ENCODE measurements at regions of chr2 and their contacts with region 1.

Region 1: DNA sequence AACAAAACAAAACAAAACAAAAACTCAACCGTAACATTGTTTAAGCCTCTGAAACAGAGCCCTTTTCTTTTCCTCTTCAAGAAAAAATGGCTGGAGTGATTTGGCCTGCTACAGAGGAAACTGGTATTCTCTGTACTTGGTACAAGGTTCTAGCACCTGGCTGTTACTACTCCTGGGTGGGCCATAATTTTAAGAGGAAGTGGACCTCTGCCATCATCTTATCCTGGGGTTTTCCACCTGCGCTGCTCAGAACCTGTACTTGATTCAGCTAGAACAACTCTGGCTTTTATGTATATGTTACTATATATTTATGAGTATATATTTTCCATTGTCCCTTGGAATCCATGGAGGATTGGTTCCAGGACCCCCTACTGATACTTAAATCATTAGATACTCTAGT is 22.5 kb downstream of the SRSF7 start:
- DNase-seq: no peak
- ATAC-seq: no peak
- H3K4me3 ChIP-seq: no peak overlapping the region
- H3K27ac ChIP-seq: no peak overlapping the region
- H3K4me1 ChIP-seq: no peaks in the 10 kb centered on the region
- H3K27me3 ChIP-seq: no peaks in the 10 kb centered on the region
- CTCF ChIP-seq: no peak

Region 2: GRCh38 chr2:38535744-38536506 is 192.8 kb before region 1 on chr2:
- intact Hi-C with region 1: loop called in 1 of 2 experiments (anchors 5 kb)
- DNase-seq: peak; percentile 87 to 91
- ATAC-seq: peak; percentile 95 to 98 (median 97)
- H3K4me3 ChIP-seq: peak overlapping the region; percentile 70
- H3K27ac ChIP-seq: peak overlapping the region; percentile 25
- H3K4me1 ChIP-seq: peaks cover 4% of the 10 kb centered on the region
- H3K27me3 ChIP-seq: no peaks in the 10 kb centered on the region
- CTCF ChIP-seq: peak; percentile 91

Region 3: DNA sequence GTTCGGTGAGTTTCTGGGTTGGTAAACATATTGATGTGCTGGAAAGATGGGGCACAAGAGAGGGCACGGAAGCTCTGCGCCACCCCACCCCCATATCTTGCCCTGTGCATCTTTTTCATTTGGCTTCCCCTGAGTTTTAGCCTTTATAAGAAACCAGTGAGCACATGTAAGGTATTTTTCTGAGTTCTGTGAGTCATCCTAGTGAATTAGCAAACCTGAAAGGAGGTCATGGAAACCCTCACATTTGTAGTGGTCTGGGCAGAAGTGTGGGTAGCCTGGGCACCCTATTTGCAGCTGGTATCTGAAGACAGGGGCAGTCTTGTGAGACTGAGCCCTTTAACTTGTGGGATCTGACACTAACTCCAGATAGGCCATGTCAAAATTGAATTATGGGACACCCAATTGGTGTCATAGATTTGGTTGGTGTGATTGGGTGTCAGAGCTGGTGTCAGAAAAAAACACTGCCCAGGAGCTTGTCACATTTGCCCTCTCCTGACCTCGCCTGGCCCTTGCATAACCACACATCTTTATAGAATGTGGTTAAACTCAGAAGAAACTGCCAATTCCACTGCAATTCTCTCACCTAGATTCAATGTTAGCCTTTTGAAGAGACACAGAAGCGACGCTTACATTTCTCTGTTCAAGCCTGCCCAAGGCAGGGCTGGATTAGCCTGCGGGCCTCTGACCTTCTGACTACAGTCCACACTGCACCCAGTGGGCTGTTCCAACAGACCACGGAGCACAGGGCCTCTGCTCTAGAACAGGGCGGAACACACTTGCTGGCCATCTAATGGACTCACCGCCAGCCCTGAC is 74.8 kb before region 1 on chr2:
- intact Hi-C with region 1: no loop called
- DNase-seq: no peak
- ATAC-seq: no peak
- H3K4me3 ChIP-seq: no peak overlapping the region
- H3K27ac ChIP-seq: no peak overlapping the region
- H3K4me1 ChIP-seq: no peaks in the 10 kb centered on the region
- H3K27me3 ChIP-seq: no peaks in the 10 kb centered on the region
- CTCF ChIP-seq: no peak

Region 4: DNA sequence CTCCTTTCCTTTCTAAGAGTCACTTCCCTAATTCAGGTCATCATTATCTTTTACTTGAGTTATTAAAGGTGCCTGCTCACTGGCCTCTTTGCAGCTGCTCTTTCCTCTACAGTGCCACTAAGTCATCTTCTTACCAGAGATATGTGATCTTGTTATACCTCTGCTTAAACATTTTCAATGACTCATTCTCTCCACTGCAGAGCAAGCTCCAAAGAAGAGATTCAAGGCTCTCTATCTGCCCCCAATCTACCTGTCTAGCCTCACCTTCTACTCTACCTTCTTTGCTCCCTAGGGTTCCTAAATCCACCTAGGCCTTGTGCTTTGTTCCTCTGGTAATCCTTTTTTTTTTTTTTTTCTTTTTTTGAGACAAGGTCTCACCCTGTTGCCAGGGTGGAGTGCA is 164.1 kb after region 1 on chr2:
- intact Hi-C with region 1: no loop called
- DNase-seq: no peak
- ATAC-seq: peak in 1 of 4 donors; percentile 53
- H3K4me3 ChIP-seq: no peak overlapping the region
- H3K27ac ChIP-seq: no peak overlapping the region
- H3K4me1 ChIP-seq: no peaks in the 10 kb centered on the region
- H3K27me3 ChIP-seq: no peaks in the 10 kb centered on the region
- CTCF ChIP-seq: no peak